ENCODE measurements at regions of chr5 and their contacts with region 1.

Region 1: GRCh38 chr5:132820162-132820754 is 7.2 kb downstream of the SOWAHA start:
- DNase-seq: peak; percentile 92 to 96 (median 94)
- ATAC-seq: peak; percentile 85 to 88
- H3K4me3 ChIP-seq: no peak overlapping the region
- H3K27ac ChIP-seq: no peak overlapping the region
- H3K4me1 ChIP-seq: no peaks in the 10 kb centered on the region
- H3K27me3 ChIP-seq: no peaks in the 10 kb centered on the region

Region 2: GRCh38 chr5:132386644-132387286 is 433.5 kb before region 1 on chr5:
- intact Hi-C with region 1: loop called in 1 of 4 experiments (anchors 10 kb)
- DNase-seq: peak; percentile 73 to 89 (median 86)
- ATAC-seq: peak; percentile 86
- H3K4me3 ChIP-seq: no peak overlapping the region
- H3K27ac ChIP-seq: peak overlapping the region; percentile 91
- H3K4me1 ChIP-seq: peaks cover 10% of the 10 kb centered on the region
- H3K27me3 ChIP-seq: no peaks in the 10 kb centered on the region

Region 3: DNA sequence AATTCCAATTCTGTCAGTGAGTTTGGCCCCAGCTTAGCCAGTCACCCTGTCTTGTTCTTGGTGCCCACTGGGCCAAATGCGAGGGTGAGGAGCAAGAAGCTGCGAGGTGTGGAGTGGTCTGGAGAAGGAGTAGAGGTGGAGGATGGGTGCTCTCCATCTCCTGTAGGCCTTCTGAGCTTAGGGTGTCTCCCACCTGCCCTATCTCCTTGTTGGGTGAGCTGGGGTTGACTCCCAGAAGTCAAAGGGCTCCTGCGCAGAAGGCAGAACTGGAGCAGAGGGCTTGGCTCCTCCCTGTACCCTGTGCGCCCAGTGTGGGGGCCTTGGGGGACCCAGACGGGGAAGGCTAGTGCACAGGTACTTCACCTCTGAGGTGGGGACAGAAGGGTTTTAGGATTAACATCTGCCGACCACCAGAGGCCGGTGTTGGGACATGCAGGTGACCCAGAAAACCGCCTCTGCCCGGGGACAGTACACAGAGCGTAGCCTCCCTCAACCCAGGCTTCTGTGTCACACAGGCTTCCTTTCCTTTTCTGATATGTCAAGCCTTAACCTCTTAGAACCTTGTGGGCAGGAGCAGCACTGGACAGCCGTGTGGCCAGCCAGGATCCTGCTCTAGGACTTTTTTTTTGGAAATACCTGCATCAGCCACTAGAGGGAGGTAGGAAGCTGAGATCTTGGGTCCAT is 293.8 kb before region 1 on chr5:
- intact Hi-C with region 1: loop called in 1 of 4 experiments (anchors 10 kb)
- DNase-seq: peak in 2 of 3 donors; percentile 43 to 62
- ATAC-seq: peak; percentile 84 to 86
- H3K4me3 ChIP-seq: no peak overlapping the region
- H3K27ac ChIP-seq: no peak overlapping the region
- H3K4me1 ChIP-seq: no peaks in the 10 kb centered on the region
- H3K27me3 ChIP-seq: no peaks in the 10 kb centered on the region

Region 4: DNA sequence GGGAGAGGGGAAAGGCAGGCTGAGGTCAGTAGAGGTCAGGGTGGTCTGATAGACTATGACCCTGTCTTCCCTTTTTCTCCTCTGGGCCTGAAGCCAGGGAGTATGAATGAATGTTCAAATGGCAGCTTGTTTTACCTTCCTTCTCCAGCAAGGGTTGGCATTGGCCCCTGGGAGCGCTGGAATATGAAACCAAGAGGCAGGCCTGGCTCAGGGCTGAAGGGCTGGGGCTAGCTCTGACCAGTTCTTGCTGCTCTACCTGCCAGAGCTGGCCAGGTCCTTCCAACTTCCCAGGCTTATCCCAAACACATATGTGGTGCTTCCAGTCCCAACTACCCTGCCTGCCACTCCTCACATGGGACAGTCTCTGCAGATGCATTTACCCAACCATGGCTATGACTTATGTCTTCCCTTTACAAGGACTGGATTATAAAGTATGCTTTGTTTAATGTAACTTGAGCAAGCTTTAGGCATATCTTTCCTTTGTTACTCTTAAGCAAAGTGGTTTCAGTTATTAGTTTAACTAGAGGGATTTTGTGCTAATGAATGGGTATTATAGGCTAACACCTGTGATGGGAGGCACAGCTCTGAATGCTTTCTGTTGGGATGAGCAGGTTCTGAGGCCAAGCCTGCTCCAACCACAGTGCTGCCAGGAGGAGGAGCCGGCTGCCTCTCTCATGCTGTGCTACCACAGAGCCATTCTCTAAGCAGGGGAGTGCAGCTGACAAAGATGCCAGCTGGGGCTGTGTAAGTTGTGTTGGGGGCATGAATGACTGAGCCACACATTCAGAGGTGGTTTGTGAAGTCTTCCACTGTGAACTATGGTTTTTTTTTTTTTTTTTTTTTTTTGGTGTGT is 66.9 kb before region 1 on chr5:
- intact Hi-C with region 1: no loop called
- DNase-seq: peak in 1 of 3 donors; percentile 41
- ATAC-seq: peak in 1 of 2 donors; percentile 12
- H3K4me3 ChIP-seq: no peak overlapping the region
- H3K27ac ChIP-seq: no peak overlapping the region
- H3K4me1 ChIP-seq: no peaks in the 10 kb centered on the region
- H3K27me3 ChIP-seq: no peaks in the 10 kb centered on the region

Region 5: DNA sequence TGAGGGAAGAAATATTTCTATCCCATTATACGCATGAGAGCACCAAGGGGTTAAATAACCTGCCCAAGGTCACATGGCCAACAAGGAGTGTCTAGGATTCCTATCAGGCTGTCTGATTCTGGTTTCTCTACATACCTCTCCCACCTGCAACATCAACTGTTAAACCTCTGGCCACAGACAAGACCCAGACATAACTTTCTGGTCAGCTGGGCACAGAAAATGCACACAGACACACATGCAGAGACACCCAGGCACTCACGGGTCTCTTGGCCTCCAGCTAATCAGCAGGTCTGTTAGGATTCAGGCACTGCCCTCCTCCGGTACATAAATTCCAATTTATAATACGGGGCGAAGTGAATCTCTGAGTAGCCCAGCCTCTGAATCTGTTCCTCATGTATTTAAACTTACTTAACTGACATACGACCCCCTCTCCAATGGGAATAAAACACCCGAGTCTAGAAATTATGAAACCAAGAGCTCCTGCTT is 44.7 kb before region 1 on chr5:
- intact Hi-C with region 1: no loop called
- DNase-seq: no peak
- ATAC-seq: no peak
- H3K4me3 ChIP-seq: peak overlapping the region; percentile 6
- H3K27ac ChIP-seq: no peak overlapping the region
- H3K4me1 ChIP-seq: peaks cover 33% of the 10 kb centered on the region
- H3K27me3 ChIP-seq: no peaks in the 10 kb centered on the region

Region 6: DNA sequence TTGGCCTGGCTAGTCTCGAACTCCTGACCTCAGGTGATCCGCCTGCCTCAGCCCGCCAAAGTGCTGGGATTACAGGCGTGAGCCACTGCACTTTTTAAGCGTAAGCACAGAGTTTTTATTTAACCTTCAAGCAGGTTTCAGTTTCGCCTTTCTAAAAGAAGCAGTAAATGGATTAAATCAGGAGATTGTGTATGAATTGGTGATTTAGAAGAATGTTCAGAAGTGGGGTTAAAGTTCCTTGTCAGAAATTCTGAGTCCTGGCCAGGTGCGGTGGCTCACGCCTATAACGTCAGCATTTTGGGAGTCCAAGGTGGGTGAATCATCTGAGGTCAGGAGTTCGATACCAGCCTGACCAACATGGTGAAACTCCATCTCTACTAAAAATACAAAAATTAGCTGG is 243.7 kb after region 1 on chr5:
- intact Hi-C with region 1: no loop called
- DNase-seq: no peak
- ATAC-seq: no peak
- H3K4me3 ChIP-seq: no peak overlapping the region
- H3K27ac ChIP-seq: no peak overlapping the region
- H3K4me1 ChIP-seq: peaks cover 4% of the 10 kb centered on the region
- H3K27me3 ChIP-seq: no peaks in the 10 kb centered on the region